Endothelial cell of umbilical vein (primary cell): ENCODE measurements at regions of chr7 and their contacts with region 1.

Region 1: DNA sequence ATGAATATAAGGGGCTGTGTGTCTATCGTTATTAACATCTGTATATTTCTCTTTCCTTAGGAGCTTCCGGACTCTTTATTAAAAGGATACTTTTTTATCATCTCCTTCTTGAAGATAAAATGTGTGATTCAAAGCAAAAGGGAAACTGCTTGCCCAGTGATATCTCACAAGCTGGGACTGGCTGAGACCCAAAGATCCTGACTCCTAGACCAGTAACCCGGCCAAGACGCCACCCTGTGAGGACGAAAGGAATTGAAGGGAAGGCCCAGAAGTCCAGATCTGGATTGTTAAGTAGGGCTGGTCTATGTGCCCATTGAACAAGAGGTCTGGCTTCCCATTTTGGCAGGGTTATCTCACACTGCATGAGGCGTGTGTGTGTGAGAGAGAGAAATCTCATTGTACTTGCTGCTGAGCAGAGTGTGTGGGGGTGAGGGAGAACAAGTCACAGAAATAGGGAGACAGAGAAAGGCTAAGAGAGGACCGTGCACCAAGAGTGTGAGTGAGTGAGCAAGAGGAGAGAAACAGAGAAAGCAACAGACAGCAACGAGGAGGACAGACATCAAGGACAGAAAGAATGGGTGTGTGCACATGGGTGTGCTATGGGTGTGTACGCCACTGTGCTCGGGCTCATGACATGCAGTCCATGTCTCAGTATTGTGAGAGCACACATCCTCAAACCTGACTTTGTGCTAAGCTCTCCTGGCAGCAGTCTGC is 75.4 kb downstream of the PLXNA4 start:
- DNase-seq: peak; percentile 95
- H3K4me3 ChIP-seq: no peak overlapping the region
- H3K27ac ChIP-seq: peak overlapping the region; percentile 89
- H3K4me1 ChIP-seq: peaks cover 35% of the 10 kb centered on the region
- H3K27me3 ChIP-seq: no peaks in the 10 kb centered on the region
- CTCF ChIP-seq: peak; percentile 70 to 71
- POLR2A ChIP-seq: no peak

Region 2: GRCh38 chr7:131556052-131556908 is 944.6 kb before region 1 on chr7 and contains the start of gene PODXL:
- CTCF ChIA-PET with region 1: no interaction called
- POLR2A ChIA-PET with region 1: no interaction called
- dilution Hi-C with region 1: no loop called
- intact Hi-C with region 1: loop called (anchors 10 kb)
- DNase-seq: peak; percentile 75
- H3K4me3 ChIP-seq: peak within 1 kb of the TSS; percentile 78 to 82 (median 79)
- H3K27ac ChIP-seq: peak within 1 kb of the TSS; percentile 68
- H3K4me1 ChIP-seq: peaks cover 29% of the 10 kb centered on the region
- H3K27me3 ChIP-seq: no peaks in the 10 kb centered on the region
- CTCF ChIP-seq: no peak
- POLR2A ChIP-seq: peak; percentile 75
- total RNA-seq, gene PODXL: 156 and 264 TPM in 2 replicates

Region 3: GRCh38 chr7:132065193-132065988 is 435.5 kb before region 1 on chr7:
- CTCF ChIA-PET with region 1: no interaction called
- POLR2A ChIA-PET with region 1: no interaction called
- dilution Hi-C with region 1: no loop called
- intact Hi-C with region 1: loop called (anchors 5 kb)
- DNase-seq: peak; percentile 83
- H3K4me3 ChIP-seq: no peak overlapping the region
- H3K27ac ChIP-seq: peak overlapping the region; percentile 80
- H3K4me1 ChIP-seq: peaks cover 15% of the 10 kb centered on the region
- H3K27me3 ChIP-seq: no peaks in the 10 kb centered on the region
- CTCF ChIP-seq: no peak
- POLR2A ChIP-seq: no peak

Region 4: GRCh38 chr7:132386201-132386681 is 114.6 kb before region 1 on chr7:
- CTCF ChIA-PET with region 1: interaction called, 4 read pairs
- POLR2A ChIA-PET with region 1: no interaction called
- dilution Hi-C with region 1: no loop called
- intact Hi-C with region 1: loop called (anchors 2 kb)
- DNase-seq: peak; percentile 97
- H3K4me3 ChIP-seq: no peak overlapping the region
- H3K27ac ChIP-seq: peak overlapping the region; percentile 10
- H3K4me1 ChIP-seq: peaks cover 21% of the 10 kb centered on the region
- H3K27me3 ChIP-seq: no peaks in the 10 kb centered on the region
- CTCF ChIP-seq: no peak
- POLR2A ChIP-seq: no peak

Region 5: GRCh38 chr7:132430861-132431822 is 69.7 kb before region 1 on chr7:
- CTCF ChIA-PET with region 1: interaction called, 8 read pairs
- POLR2A ChIA-PET with region 1: no interaction called
- dilution Hi-C with region 1: no loop called
- intact Hi-C with region 1: loop called (anchors 1 kb)
- DNase-seq: peak; percentile 92
- H3K4me3 ChIP-seq: no peak overlapping the region
- H3K27ac ChIP-seq: peak overlapping the region; percentile 87
- H3K4me1 ChIP-seq: peaks cover 44% of the 10 kb centered on the region
- H3K27me3 ChIP-seq: no peaks in the 10 kb centered on the region
- CTCF ChIP-seq: no peak
- POLR2A ChIP-seq: peak; percentile 26

Region 6: DNA sequence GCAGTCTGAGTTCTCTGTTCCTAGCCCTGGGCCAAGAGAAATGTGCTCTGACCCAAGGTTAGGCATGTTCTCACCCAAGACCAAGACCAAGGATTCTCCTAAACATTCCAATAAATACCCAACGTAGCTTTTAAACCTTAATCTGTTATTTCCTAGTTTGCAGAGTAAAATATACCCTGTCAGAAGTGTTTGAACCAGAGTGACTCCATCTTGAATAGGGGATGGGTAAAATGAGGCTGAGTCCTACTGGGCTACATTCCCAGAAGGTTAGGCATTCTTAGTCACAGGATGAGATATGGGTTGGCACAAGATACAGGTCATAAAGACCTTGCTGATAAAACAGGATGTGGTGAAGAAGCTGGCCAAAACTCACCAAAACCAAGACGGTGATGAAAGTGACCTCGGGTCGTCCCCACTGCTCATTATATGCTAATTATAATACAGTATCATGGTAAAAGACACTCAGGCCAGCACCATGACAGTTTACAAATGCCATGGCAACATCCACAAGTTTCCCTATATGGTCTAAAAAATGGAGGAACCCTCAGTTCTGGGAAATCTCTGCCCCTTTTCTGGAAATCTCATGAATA is 47.7 kb after region 1 on chr7:
- CTCF ChIA-PET with region 1: interaction called, 3 read pairs
- POLR2A ChIA-PET with region 1: no interaction called
- dilution Hi-C with region 1: no loop called
- intact Hi-C with region 1: loop called (anchors 1 kb)
- DNase-seq: peak; percentile 61
- H3K4me3 ChIP-seq: no peak overlapping the region
- H3K27ac ChIP-seq: peak overlapping the region; percentile 17
- H3K4me1 ChIP-seq: peaks cover 15% of the 10 kb centered on the region
- H3K27me3 ChIP-seq: no peaks in the 10 kb centered on the region
- CTCF ChIP-seq: no peak
- POLR2A ChIP-seq: peak; percentile 34

Region 7: DNA sequence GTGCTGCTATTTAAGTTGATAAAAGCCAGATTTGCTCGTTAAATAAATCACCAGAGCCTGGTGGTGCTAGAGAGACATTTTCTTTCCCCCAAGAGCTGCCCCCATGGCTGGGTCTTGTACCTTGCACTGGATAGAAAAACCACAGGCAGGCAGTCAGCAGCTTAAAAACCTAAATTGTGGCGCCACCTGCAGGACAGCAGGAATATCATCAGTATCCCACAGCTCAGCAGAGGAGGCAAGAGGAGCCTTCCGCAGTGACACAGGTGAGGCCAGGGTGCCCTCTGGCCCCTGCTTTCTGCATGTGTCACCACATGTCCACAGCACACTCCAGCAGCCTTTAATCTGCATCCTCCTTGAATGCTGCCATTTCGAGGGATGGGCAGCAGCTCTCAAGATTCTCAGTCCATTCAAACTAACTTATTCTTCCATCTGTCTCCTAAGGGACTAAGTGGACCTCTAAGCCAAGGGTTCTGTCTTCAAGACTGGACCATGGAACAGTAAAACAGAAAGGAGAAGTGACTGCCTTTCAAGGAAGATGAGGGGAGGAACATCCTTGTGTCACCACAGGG is 79.9 kb after region 1 on chr7:
- CTCF ChIA-PET with region 1: interaction called, 28 read pairs
- POLR2A ChIA-PET with region 1: no interaction called
- dilution Hi-C with region 1: no loop called
- intact Hi-C with region 1: no loop called
- DNase-seq: peak; percentile 78
- H3K4me3 ChIP-seq: no peak overlapping the region
- H3K27ac ChIP-seq: no peak overlapping the region
- H3K4me1 ChIP-seq: peaks cover 7% of the 10 kb centered on the region
- H3K27me3 ChIP-seq: no peaks in the 10 kb centered on the region
- CTCF ChIP-seq: peak; percentile 59 to 76
- POLR2A ChIP-seq: no peak